ENCODE measurements at regions of chr18 and their contacts with region 1.

Region 1: GRCh38 chr18:25351777-25352628 is at the start of gene ZNF521:
- DNase-seq: peak; percentile 11
- H3K4me3 Mint-ChIP-seq: peak within 1 kb of the TSS; percentile 77
- H3K27ac Mint-ChIP-seq: no peak within 1 kb of the TSS
- H3K4me1 Mint-ChIP-seq: peaks cover 5% of the 10 kb centered on the region
- H3K27me3 Mint-ChIP-seq: peaks cover 65% of the 10 kb centered on the region
- total RNA-seq, gene ZNF521: not detected in 2 replicates

Region 2: DNA sequence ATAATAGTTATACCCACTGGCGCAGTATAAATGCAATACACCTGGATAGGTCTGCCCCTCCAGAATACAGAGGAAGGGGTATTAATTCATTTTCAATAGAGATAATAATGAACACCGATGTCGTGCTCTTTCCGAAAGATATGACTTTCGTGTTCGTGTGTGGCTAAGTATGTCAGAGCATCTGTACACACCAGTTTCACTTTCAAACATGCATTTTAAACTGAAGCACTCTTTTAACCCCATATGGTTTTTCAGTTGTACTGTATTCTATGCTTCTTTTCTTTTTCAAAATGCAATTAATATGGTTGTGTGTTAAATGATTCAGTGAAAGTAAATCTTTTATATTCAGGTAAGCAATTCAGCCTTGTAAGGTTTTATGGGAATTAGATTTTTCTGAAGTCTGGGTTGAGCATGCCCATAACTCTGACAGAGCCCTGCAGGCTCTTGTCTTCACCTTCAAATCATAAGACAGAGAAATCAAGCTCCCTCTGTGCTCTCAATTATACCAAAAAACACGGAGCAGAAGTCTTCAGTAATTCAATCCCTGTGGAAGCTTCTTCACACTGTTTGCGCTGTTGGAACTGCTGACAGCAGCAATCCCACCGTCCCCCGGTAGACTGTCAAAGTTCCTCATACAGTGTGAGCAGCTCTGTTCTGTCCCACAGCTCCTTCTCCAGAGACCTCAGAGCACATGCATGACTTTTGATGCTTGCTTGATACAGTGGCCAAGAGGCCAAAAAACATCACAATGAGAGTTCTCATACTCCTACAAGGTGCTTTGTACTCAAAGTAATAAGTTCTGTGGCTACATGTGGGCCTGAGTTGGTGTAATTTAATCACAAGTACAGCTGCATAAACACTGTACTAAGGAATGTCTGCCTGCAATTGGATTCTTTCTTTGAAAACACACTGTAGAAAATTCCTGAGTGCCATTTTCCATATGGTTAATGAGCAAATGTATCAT is 186.9 kb before region 1 on chr18:
- intact Hi-C with region 1: loop called (anchors 10 kb)
- DNase-seq: no peak
- H3K4me3 Mint-ChIP-seq: peak overlapping the region; percentile 70
- H3K27ac Mint-ChIP-seq: no peak overlapping the region
- H3K4me1 Mint-ChIP-seq: peaks cover 24% of the 10 kb centered on the region
- H3K27me3 Mint-ChIP-seq: peaks cover 5% of the 10 kb centered on the region

Region 3: GRCh38 chr18:25314838-25315190 is 37.2 kb before region 1 on chr18:
- intact Hi-C with region 1: no loop called
- DNase-seq: no peak
- H3K4me3 Mint-ChIP-seq: no peak overlapping the region
- H3K27ac Mint-ChIP-seq: no peak overlapping the region
- H3K4me1 Mint-ChIP-seq: no peaks in the 10 kb centered on the region
- H3K27me3 Mint-ChIP-seq: peaks cover 2% of the 10 kb centered on the region

Region 4: DNA sequence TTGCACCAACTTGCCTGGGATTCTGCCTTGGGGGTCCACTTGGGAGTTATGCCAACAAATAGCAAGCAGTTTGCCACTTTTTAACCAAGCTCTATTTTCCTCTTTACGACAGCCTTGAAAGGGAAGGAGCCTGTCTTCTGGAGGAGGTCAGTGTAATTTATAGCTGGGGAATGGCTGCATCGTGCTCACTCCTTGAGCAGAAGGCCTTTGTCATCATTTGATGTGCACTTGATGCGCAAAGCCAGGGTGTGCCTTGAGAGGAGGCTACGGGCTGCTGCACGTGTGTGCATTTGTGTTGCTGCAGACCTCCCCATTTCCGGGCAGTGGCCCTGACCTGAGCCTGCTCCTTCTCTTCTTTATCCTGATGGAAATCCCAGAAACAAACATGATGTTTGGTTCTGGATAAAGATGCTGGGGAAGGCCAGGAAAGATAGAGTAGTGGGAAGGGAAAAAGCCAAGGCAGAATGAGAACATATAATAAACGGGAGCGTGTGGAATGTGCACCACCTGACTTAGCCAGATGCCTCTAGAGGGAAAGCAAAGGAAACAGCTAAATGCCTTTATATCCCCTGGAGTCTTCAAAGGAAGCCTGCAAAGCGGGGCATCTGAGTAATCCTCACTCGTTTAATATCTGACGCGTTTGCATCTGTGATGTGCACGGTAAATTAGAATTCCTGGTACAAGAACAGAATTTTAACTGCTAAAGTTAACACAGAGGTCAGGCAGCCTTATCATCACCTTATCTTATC is 68.2 kb after region 1 on chr18:
- intact Hi-C with region 1: no loop called
- DNase-seq: no peak
- H3K4me3 Mint-ChIP-seq: no peak overlapping the region
- H3K27ac Mint-ChIP-seq: no peak overlapping the region
- H3K4me1 Mint-ChIP-seq: no peaks in the 10 kb centered on the region
- H3K27me3 Mint-ChIP-seq: no peaks in the 10 kb centered on the region

Measured in activated T-helper 1 cell treated with anti-CD3 and anti-CD28 coated beads, Interleukin-12 subunit alpha, Interleukin-12 subunit beta, Interleukin-2, Interleukin-4 antibody, amounts not matched to agents 30 ng/mL and 10 ng/mL and 1 ng/mL, durations not matched to agents 14 hours and 24 hours and 36 hours (primary cell).